Activated T-helper 1 cell treated with anti-CD3 and anti-CD28 coated beads, Interleukin-12 subunit alpha, Interleukin-12 subunit beta, Interleukin-2, Interleukin-4 antibody, amounts not matched to agents 30 ng/mL and 10 ng/mL and 1 ng/mL, durations not matched to agents 14 hours and 24 hours and 36 hours (primary cell): ENCODE measurements at regions of chr4 and their contacts with region 1.

Region 1: DNA sequence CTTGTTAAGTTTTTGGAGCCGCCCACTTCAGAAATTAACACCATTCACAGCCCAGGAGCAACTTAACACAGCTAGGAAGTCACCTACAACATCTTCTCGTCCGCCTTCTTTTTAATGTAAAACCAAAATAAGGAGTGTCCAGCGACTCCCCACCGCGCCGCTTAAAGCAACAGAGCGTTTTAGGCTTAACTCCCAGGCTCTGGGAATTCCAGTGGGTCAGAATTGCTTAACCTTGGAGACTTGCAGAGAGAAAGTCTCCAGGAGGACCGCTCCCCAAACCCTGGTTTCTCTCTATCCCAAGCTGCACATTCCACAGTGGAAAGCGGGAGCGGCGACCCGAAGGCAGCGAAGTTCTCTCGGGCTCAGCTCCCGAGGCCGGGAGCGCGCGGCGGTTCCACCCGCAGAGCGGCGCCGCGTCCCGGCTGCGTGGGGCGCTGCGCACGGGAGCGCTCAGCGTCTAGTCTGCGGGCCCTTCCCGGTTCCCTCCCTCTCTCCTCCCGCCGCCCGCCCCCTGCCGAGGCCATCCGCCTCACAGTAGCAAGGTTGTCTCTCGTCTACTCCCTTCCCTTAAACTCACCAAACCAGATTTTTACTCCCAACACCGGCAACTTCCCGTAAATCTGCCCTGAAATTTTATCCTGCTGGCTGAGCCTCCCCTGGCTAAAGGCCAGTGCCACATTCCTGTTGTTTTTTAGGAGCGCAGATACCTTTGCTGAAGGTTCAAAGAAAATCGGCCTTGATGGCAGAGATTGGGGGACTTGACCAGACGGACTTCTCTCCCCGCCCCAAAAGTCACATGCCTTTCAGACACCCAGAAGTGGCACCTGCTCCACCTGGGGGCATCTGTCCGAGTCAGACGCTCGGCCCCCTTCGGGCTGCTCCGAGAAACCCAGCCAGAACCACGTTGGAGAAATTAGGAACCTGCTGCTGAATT is at the start of gene RBM47:
- DNase-seq: peak; percentile 12
- H3K4me3 Mint-ChIP-seq: peak within 1 kb of the TSS; percentile 92
- H3K27ac Mint-ChIP-seq: peak within 1 kb of the TSS; percentile 84
- H3K4me1 Mint-ChIP-seq: peaks cover 41% of the 10 kb centered on the region
- H3K27me3 Mint-ChIP-seq: peaks cover 2% of the 10 kb centered on the region
- total RNA-seq, gene RBM47: 20.3 and 21.4 TPM in 2 replicates

Region 2: DNA sequence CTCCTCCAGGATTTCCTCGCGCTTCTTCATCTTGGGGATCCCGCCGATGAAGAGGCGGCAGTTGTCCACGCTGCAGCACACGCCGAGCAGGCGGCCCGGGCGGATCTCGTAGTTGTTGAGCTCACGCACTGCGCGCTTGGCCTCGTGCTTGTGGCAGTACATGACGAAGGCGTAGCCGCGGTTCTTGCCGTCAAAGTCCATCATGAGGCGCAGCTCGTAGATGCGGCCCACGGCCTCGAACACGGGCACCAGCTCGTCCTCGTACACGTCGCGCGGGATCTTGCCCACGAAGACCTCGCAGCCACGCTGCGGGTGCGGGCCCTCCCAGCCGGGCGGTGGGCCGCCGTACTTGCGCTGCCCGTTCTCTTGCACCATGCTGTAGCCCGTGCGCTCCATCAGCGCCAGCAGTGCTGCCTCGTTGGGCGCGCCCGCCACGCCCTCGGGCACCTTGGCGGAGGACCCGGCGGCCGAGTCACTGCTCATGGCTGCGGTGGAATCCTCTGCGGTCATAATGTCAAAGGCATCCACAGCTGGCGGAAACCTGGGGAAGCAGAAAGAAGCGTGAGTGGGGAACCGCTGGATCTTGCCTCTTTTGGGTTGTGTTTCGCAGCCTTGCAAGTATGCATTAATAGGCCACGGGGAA is 191.2 kb before region 1 on chr4:
- intact Hi-C with region 1: loop called (anchors 5 kb)
- DNase-seq: no peak
- H3K4me3 Mint-ChIP-seq: peak overlapping the region; percentile 3
- H3K27ac Mint-ChIP-seq: peak overlapping the region; percentile 8
- H3K4me1 Mint-ChIP-seq: peaks cover 54% of the 10 kb centered on the region
- H3K27me3 Mint-ChIP-seq: no peaks in the 10 kb centered on the region

Region 3: GRCh38 chr4:40550948-40551462 is 78.7 kb before region 1 on chr4:
- intact Hi-C with region 1: loop called (anchors 2 kb)
- DNase-seq: peak; percentile 37
- H3K4me3 Mint-ChIP-seq: peak overlapping the region; percentile 84
- H3K27ac Mint-ChIP-seq: peak overlapping the region; percentile 81
- H3K4me1 Mint-ChIP-seq: peaks cover 65% of the 10 kb centered on the region
- H3K27me3 Mint-ChIP-seq: no peaks in the 10 kb centered on the region

Region 4: GRCh38 chr4:40662962-40663604 is 33.4 kb after region 1 on chr4:
- intact Hi-C with region 1: loop called (anchors 1 kb)
- DNase-seq: no peak
- H3K4me3 Mint-ChIP-seq: no peak overlapping the region
- H3K27ac Mint-ChIP-seq: peak overlapping the region; percentile 81
- H3K4me1 Mint-ChIP-seq: peaks cover 31% of the 10 kb centered on the region
- H3K27me3 Mint-ChIP-seq: peaks cover 1% of the 10 kb centered on the region

Region 5: GRCh38 chr4:40699648-40700047 is 70.0 kb after region 1 on chr4:
- intact Hi-C with region 1: loop called (anchors 1 kb)
- DNase-seq: no peak
- H3K4me3 Mint-ChIP-seq: peak overlapping the region; percentile 7
- H3K27ac Mint-ChIP-seq: peak overlapping the region; percentile 74
- H3K4me1 Mint-ChIP-seq: peaks cover 34% of the 10 kb centered on the region
- H3K27me3 Mint-ChIP-seq: no peaks in the 10 kb centered on the region